PC-9 (cell line): ENCODE measurements at regions of chr15 and their contacts with region 1.

Region 1: GRCh38 chr15:67303490-67304363 is 49.1 kb downstream of the IQCH start:
- DNase-seq: no peak
- H3K4me3 ChIP-seq: no peak overlapping the region
- H3K27ac ChIP-seq: no peak overlapping the region
- H3K4me1 ChIP-seq: no peaks in the 10 kb centered on the region
- H3K27me3 ChIP-seq: no peaks in the 10 kb centered on the region
- CTCF ChIP-seq: peak; percentile 66

Region 2: GRCh38 chr15:66901336-66902100 is 402.2 kb before region 1 on chr15:
- CTCF ChIA-PET with region 1: interaction called, 8 read pairs
- POLR2A ChIA-PET with region 1: no interaction called
- intact Hi-C with region 1: loop called (anchors 5 kb)
- DNase-seq: no peak
- H3K4me3 ChIP-seq: no peak overlapping the region
- H3K27ac ChIP-seq: no peak overlapping the region
- H3K4me1 ChIP-seq: no peaks in the 10 kb centered on the region
- H3K27me3 ChIP-seq: no peaks in the 10 kb centered on the region
- CTCF ChIP-seq: no peak

Region 3: DNA sequence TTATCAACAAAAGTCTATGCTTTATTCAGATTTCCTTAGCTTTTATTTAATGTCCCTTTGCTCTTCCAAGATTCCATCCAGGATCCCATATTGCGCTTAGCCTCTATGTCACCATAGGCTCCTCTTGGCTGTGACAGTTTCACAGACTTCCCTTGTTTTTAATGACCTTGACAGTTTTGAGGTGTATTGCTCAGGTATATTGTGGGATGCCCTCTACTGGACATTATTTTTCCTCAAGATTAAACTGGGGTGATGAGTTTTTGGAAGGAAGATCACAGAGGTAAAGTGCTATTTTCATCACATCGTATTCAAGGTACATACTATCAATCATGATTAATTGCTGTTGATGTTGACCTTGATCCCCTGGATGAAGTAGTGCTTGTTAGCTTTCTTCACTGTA is 337.5 kb before region 1 on chr15:
- CTCF ChIA-PET with region 1: no interaction called
- POLR2A ChIA-PET with region 1: no interaction called
- intact Hi-C with region 1: no loop called
- DNase-seq: no peak
- H3K4me3 ChIP-seq: no peak overlapping the region
- H3K27ac ChIP-seq: no peak overlapping the region
- H3K4me1 ChIP-seq: no peaks in the 10 kb centered on the region
- H3K27me3 ChIP-seq: no peaks in the 10 kb centered on the region
- CTCF ChIP-seq: peak; percentile 57

Region 4: DNA sequence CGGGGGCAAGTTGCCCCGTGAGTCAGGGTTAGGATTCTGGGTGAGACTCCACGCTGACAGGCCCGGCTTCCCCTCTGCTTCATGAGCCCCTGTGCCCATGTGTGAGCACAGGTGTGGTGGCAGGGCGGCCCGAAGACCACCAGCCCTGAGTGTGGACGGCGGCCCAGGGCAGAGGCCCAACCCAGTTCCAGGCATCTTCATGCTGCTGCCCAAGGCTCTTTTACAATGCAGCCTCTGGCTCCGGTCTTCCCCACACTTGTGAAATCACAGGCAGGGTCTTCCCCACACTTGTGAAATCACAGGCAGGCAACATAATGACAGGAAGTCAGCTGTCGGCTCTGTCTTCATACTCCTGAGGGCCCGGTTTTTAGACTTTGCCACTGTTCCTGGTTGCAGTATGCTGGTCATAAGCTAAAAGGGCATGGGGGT is 128.1 kb before region 1 on chr15:
- CTCF ChIA-PET with region 1: no interaction called
- POLR2A ChIA-PET with region 1: no interaction called
- intact Hi-C with region 1: no loop called
- DNase-seq: no peak
- H3K4me3 ChIP-seq: no peak overlapping the region
- H3K27ac ChIP-seq: peak overlapping the region; percentile 85
- H3K4me1 ChIP-seq: peaks cover 60% of the 10 kb centered on the region
- H3K27me3 ChIP-seq: no peaks in the 10 kb centered on the region
- CTCF ChIP-seq: no peak

Region 5: DNA sequence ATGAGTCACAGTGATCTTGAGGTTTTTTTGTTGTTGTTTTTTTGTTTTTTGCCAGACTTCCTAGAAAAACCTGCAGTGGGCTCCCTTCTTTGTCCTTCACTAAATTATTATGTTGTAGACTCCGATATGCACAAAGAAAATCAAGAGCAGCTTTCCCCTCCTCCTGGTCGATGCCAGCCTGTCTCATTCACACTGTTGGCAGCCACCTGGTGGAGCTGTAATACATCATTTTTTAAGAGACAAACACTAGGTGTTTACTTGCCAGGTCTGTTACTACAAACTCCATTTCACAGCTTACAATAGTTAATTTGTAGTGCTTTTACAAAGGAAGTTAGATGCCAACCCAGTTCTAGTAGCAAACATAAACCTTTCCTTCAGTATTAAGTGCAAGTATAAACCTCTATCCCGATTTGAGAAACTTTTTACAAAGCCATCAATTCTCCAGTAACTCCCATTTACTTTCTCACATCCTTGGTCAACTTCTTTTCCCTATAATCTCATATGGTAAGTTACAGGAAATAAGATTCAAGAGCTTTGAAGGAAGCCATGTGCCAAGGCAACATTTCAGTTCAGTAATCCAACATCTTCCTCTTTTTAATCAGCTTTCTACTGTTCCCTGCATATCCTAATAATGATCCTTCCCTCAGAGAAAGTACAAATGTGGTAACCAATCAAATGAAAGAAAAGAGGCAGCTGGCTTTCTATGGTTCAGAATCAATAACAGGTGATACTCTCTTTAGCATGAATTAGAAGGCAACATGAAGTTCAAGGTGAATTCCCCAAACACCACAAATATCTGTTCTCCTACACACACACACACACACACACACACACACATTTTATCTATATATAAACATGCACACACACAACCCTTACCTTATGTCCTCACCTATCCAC is 63.2 kb before region 1 on chr15:
- CTCF ChIA-PET with region 1: no interaction called
- POLR2A ChIA-PET with region 1: no interaction called
- intact Hi-C with region 1: loop called (anchors 1 kb)
- DNase-seq: peak in 1 of 2 experiments; percentile 11
- H3K4me3 ChIP-seq: no peak overlapping the region
- H3K27ac ChIP-seq: no peak overlapping the region
- H3K4me1 ChIP-seq: peaks cover 4% of the 10 kb centered on the region
- H3K27me3 ChIP-seq: no peaks in the 10 kb centered on the region
- CTCF ChIP-seq: peak; percentile 52; the same call in 1 of the 2 replicates

Region 6: GRCh38 chr15:67575039-67575502 is 271.3 kb after region 1 on chr15:
- CTCF ChIA-PET with region 1: no interaction called
- POLR2A ChIA-PET with region 1: no interaction called
- intact Hi-C with region 1: no loop called
- DNase-seq: no peak
- H3K4me3 ChIP-seq: no peak overlapping the region
- H3K27ac ChIP-seq: no peak overlapping the region
- H3K4me1 ChIP-seq: no peaks in the 10 kb centered on the region
- H3K27me3 ChIP-seq: no peaks in the 10 kb centered on the region
- CTCF ChIP-seq: no peak